Dorsolateral prefrontal cortex (tissue), 120 donors: ENCODE measurements at regions of chr14 and their contacts with region 1.

Region 1: DNA sequence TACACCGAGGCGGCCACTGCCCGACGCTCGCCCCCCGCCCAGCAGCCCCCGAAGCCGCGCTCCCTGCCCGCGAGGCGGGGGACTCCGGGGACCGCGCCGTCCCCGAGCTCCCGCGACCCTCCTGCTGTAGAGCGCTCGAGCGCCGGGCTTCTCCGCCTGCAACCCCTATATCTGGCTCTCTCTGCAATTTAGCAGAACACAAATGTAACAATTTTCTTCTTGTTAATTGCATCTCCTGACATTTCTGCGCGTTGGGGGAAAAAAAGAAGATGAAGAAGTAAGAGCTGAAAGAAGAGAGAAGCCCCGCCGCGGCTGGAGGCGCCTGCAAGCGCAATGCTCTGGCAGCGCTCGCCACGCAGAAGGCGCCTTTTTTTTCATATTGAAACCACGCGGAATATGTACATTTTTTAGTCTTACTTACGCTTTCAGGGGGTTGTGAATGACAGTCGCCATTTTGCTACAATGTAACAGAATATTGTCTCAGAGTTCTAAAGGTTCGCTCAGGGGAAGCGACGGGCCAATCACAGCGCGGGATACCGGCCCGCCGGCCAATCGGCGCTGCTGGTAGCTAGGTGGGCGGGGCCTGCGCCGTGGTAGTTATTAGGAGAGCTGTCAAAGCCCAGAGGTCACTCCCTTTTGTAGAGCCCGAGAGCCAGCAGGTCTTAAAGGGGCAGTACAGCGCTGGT is at the start of gene DPF3:
- DNase-seq: peak; percentile 94 to 99 (median 97)
- H3K4me3 ChIP-seq: peak within 1 kb of the TSS; percentile 67 to 96 (median 83)
- H3K27ac ChIP-seq: peak within 1 kb of the TSS in 50 of 59 donors; percentile 3 to 86 (median 72)
- H3K27me3 ChIP-seq: peaks cover 0 to 5% (median 0%) of the 10 kb centered on the region in 45 donors
- CTCF ChIP-seq: peak in 20 of 56 donors; percentile 4 to 47 (median 20)
- total RNA-seq, gene DPF3: 11.7 to 36.8 (median 19.0) TPM

Region 2: GRCh38 chr14:72708708-72709476 is 184.9 kb before region 1 on chr14:
- intact Hi-C with region 1: loop called (anchors 2 to 5 kb)
- DNase-seq: peak in 9 of 10 donors; percentile 36 to 75 (median 65)
- H3K4me3 ChIP-seq: peak overlapping the region in 2 of 59 donors; percentile 12 to 31
- H3K27ac ChIP-seq: peak overlapping the region in 53 of 59 donors; percentile 0 to 90 (median 72)
- H3K27me3 ChIP-seq: no peaks in the 10 kb centered on the region
- CTCF ChIP-seq: peak in 45 of 56 donors; percentile 4 to 71 (median 38)

Region 3: DNA sequence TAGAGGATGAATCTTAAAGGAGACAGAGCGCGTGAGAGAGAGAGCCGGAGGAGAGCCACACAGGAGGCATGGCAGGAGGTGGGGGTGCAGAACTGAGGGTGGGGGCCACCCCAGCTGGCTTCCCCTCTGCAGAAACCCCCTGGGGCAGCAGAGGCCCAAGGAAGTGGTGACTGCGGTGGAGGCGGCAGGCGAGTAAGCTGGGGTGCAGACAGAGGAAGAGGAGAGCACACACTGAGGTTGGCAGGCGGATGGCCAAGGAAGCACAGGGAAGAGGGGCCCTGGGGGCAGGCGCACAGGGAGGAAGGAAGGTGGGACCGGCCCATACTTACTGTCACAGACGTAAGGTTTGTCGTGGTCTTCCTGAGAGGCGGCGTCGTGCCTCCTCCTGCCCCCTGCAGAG is 179.7 kb before region 1 on chr14:
- intact Hi-C with region 1: loop called (anchors 2 to 5 kb)
- DNase-seq: no peak
- H3K4me3 ChIP-seq: no peak overlapping the region
- H3K27ac ChIP-seq: peak overlapping the region in 5 of 59 donors; percentile 24 to 80 (median 67)
- H3K27me3 ChIP-seq: no peaks in the 10 kb centered on the region
- CTCF ChIP-seq: no peak

Region 4: GRCh38 chr14:72792051-72792788 is 101.6 kb before region 1 on chr14:
- intact Hi-C with region 1: loop called in 1 of 2 experiments (anchors 5 kb)
- DNase-seq: peak in 9 of 10 donors; percentile 53 to 83 (median 63)
- H3K4me3 ChIP-seq: peak overlapping the region in 53 of 59 donors; percentile 3 to 57 (median 30)
- H3K27ac ChIP-seq: peak overlapping the region; percentile 51 to 93 (median 85)
- H3K27me3 ChIP-seq: no peaks in the 10 kb centered on the region
- CTCF ChIP-seq: no peak

Region 5: DNA sequence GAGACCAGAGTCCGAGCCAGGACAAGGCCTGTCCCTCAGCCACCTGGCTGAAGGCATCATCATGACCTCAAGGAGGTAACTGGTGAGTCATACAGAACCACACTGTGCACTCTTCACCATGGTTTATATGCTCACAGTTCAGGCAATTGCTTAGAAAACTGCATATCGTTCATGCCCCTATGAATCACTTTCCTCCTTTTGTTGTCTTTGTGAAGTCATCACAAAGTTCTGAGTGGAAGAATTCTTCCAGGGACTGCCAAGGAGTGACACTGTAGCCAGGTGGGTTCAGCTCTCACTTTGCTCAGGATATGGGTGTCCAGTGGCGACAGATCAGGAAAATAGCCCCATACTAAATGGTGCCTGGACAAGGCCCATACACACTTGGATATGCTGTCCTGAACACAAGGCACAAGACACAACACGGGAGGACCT is 92.4 kb before region 1 on chr14:
- intact Hi-C with region 1: loop called in 1 of 2 experiments (anchors 5 kb)
- DNase-seq: no peak
- H3K4me3 ChIP-seq: no peak overlapping the region
- H3K27ac ChIP-seq: peak overlapping the region in 50 of 59 donors; percentile 5 to 99 (median 94)
- H3K27me3 ChIP-seq: no peaks in the 10 kb centered on the region
- CTCF ChIP-seq: no peak

Region 6: GRCh38 chr14:72812292-72812911 is 81.4 kb before region 1 on chr14:
- intact Hi-C with region 1: loop called in 1 of 2 experiments (anchors 5 kb)
- DNase-seq: peak; percentile 40 to 81 (median 74)
- H3K4me3 ChIP-seq: peak overlapping the region in 10 of 59 donors; percentile 2 to 33 (median 13)
- H3K27ac ChIP-seq: peak overlapping the region in 57 of 59 donors; percentile 27 to 92 (median 80)
- H3K27me3 ChIP-seq: no peaks in the 10 kb centered on the region
- CTCF ChIP-seq: peak in 17 of 56 donors; percentile 3 to 43 (median 18)

Region 7: DNA sequence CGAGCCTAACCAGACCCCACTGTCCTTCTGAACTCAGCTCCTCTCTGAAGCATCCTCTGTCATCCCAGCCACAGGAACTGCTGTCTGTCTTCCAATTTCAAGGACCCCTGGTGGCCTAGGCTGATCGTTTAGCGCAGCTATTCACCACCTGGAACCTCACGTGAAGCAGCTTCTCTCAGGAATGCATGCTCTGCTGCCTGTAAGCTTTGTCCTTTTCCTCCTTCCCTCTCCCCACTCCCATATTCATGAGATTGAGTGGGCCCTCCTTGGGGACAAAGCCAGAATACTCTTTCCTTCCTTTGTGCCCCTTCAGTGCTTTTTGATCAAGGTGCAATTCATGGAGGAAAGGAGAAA is 17.1 kb before region 1 on chr14:
- intact Hi-C with region 1: no loop called
- DNase-seq: no peak
- H3K4me3 ChIP-seq: no peak overlapping the region
- H3K27ac ChIP-seq: peak overlapping the region in 1 of 59 donors; percentile 43
- H3K27me3 ChIP-seq: no peaks in the 10 kb centered on the region
- CTCF ChIP-seq: no peak

Region 8: DNA sequence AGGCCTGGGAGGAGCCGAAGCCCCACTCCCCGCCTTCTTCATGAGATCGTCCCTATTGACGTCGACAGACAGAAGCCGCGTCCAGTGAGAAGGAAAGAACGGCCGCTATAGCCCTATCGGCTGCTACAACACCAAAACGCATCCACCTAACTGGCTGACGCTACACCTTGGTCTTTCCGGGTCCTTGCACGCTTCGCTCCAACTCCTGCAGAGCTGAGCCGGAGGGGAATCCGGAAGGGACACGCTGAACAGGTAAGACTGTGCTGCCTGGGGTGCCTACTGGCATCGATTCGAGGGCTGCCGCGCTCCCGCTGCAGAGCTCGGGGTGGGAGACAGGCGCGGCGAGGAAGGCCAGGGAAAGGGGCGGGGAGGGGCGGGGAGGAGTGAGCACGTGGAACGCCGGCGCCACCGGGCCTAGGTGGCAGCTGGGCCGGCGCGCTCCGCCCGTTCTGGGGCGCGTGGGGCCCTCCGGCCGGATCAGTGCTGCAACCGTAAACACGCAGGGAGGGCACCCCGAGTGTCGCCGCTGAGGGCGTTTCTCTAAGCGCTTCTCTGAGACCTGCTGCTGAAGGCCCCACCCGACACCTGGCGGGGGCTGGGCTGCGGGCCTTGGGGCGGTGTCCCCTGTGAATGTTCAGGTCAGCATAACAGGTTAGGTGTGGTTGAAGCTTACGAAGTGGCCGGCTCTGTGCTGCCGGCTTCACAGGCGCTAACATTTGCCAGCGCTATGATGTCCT is 32.7 kb after region 1 on chr14 and contains the start of gene DCAF4:
- intact Hi-C with region 1: loop called in 1 of 2 experiments (anchors 2 kb)
- DNase-seq: peak; percentile 76 to 97 (median 96)
- H3K4me3 ChIP-seq: peak within 1 kb of the TSS; percentile 59 to 98 (median 86)
- H3K27ac ChIP-seq: peak within 1 kb of the TSS in 33 of 59 donors; percentile 12 to 71 (median 44)
- H3K27me3 ChIP-seq: no peaks in the 10 kb centered on the region
- CTCF ChIP-seq: peak in 9 of 56 donors; percentile 3 to 36 (median 13)
- total RNA-seq, gene DCAF4: 7.9 to 32.3 (median 20.1) TPM

Region 9: GRCh38 chr14:73458151-73458976 is 564.6 kb after region 1 on chr14 and contains the start of gene NUMB:
- intact Hi-C with region 1: no loop called
- DNase-seq: peak; percentile 83 to 99 (median 98)
- H3K4me3 ChIP-seq: peak within 1 kb of the TSS; percentile 59 to 98 (median 91)
- H3K27ac ChIP-seq: peak within 1 kb of the TSS in 58 of 59 donors; percentile 29 to 96 (median 83)
- H3K27me3 ChIP-seq: no peaks in the 10 kb centered on the region
- CTCF ChIP-seq: peak in 32 of 56 donors; percentile 6 to 57 (median 36)
- total RNA-seq, gene NUMB: 49.2 to 92.1 (median 68.4) TPM